CD8-positive, alpha-beta memory T cell (primary cell): ENCODE measurements at regions of chr2 and their contacts with region 1.

Region 1: DNA sequence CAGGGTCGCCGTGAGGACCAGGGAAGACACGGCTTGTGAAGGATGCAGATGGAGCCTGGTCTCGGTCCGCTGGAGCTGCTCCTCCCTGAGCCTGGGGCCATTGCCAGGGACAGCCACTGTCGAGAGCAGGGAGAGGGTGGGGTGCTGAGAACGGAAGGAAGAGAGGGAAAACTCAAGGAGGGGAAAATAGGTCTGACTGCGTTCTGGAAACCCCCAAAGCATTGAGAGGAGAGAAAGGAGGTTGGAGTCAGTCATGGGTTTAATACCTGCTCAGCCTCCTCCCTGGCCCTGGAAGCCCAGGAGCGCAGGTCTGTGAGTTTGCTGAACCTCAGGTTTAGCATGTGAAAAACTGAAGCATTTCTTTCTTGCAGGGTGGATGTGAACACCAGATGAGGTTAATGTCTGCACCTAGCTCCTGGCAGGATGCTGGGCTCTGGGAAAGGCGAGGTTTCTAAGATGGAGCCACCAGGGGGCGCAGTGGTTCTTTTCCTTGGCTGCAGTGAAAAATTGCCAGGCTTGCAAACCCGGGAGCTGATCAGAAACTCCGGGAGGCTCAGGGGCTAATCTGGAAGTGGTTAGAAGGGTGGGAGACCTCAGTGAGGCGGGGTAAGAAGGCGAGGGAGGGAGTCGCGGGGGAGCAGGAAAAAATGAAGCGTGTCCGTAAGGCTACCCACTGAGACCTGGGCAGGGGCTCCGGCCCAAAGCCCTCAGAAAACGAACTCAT is 33.6 kb upstream of the RNF149 start:
- DNase-seq: peak; percentile 49 to 76 (median 63)
- H3K4me3 ChIP-seq: no peak overlapping the region
- H3K4me3 Mint-ChIP-seq: peak overlapping the region in 2 of 7 donors; percentile 3 to 56
- H3K27ac ChIP-seq: no peak overlapping the region
- H3K27ac Mint-ChIP-seq: no peak overlapping the region
- H3K4me1 ChIP-seq: peaks cover 19% of the 10 kb centered on the region
- H3K4me1 Mint-ChIP-seq: peaks cover 19 to 31% (median 24%) of the 10 kb centered on the region in 3 donors
- H3K27me3 ChIP-seq: no peaks in the 10 kb centered on the region
- H3K27me3 Mint-ChIP-seq: no peaks in the 10 kb centered on the region

Region 2: DNA sequence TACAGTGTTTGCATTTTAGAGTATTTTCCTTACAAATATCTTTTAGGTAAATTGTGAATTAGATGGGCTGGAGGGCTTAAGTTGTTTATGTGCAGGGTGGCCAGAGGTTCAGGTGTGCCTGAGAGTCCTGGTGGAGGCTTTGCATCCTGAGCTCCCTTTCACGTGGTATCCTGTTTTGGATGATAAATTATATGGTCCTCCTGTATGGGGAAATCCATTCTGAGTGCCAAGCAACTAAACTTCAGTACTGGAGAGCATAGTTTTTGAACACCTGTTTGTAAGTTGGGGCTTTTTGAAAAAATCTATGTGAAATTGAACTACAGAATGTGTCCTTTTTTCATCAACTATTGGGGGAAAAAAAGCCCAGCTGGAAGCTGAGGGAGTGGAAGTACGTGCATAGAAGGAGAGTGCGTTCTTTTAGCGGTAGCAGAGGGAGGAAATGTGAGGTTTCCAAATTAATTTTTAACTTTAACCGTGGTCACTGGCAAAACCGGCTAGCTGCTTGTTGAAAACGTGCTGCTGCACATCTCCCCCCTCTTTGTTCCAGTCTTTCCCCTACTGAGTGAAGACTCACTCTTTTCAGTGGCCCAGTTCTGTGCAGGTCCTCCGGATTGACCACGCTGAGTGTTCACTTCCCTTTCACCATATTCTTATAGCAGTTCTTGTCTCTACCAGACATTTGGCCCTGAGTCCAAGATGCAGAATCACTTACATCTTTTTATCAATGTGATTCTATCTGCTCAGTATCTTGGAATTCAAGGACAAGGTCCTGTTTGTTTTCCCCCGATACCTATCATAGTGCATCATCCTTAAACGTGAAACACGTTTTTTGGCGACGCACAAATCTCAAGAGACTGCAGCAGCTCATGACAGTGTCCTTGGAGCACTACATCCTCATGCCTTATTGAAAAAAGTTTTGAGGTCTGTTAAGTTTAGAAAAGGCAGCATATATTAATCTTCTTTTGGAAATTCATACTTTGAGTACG is 74.1 kb before region 1 on chr2:
- CTCF ChIA-PET with region 1: no interaction called
- POLR2A ChIA-PET with region 1: no interaction called
- DNase-seq: no peak
- H3K4me3 ChIP-seq: no peak overlapping the region
- H3K4me3 Mint-ChIP-seq: no peak overlapping the region
- H3K27ac ChIP-seq: no peak overlapping the region
- H3K27ac Mint-ChIP-seq: peak overlapping the region; percentile 24 to 91 (median 78)
- H3K4me1 ChIP-seq: peaks cover 16% of the 10 kb centered on the region
- H3K4me1 Mint-ChIP-seq: peaks cover 33 to 66% (median 59%) of the 10 kb centered on the region in 3 donors
- H3K27me3 ChIP-seq: no peaks in the 10 kb centered on the region
- H3K27me3 Mint-ChIP-seq: no peaks in the 10 kb centered on the region

Region 3: GRCh38 chr2:101308432-101309210 is 33.4 kb before region 1 on chr2 and contains the start of gene RNF149:
- CTCF ChIA-PET with region 1: interaction called, 28 read pairs
- POLR2A ChIA-PET with region 1: interaction called, 5 read pairs
- DNase-seq: peak; percentile 87 to 94 (median 91)
- H3K4me3 ChIP-seq: peak within 1 kb of the TSS; percentile 85
- H3K4me3 Mint-ChIP-seq: peak within 1 kb of the TSS; percentile 91 to 99 (median 98)
- H3K27ac ChIP-seq: peak within 1 kb of the TSS; percentile 88
- H3K27ac Mint-ChIP-seq: peak within 1 kb of the TSS; percentile 90 to 100 (median 99)
- H3K4me1 ChIP-seq: peaks cover 74% of the 10 kb centered on the region
- H3K4me1 Mint-ChIP-seq: peaks cover 71 to 85% (median 81%) of the 10 kb centered on the region in 3 donors
- H3K27me3 ChIP-seq: no peaks in the 10 kb centered on the region
- H3K27me3 Mint-ChIP-seq: no peaks in the 10 kb centered on the region
- total RNA-seq, gene RNF149: 43.4 TPM

Region 4: DNA sequence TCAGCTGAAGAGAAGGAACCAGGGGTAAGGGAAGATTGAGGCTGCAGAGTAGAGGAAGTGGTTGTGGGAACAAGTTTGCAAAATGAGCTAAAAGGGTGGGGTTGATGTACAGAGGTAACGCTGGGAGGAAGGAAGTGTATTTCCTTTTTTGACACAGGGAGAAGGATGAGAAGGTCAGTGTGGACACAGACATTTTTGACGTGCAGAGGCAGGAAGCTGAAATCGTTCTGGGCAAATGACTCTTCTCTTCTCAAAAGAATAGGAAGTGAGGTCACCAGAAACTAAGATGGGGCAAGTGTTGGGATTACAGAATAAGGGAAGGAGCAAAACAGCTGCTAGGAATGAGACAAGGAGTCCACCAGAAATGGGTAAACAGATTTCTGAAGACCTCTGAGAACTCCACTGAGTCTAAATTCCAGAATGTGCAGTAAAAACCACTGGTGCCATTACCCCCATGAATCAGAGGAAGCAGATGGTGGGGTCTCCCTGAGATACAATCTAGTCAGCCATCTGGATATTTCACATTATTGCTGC is 13.5 kb before region 1 on chr2:
- CTCF ChIA-PET with region 1: interaction called, 18 read pairs
- POLR2A ChIA-PET with region 1: interaction called, 3 read pairs
- DNase-seq: peak in 3 of 5 donors; percentile 54 to 73 (median 72)
- H3K4me3 ChIP-seq: peak overlapping the region; percentile 25
- H3K4me3 Mint-ChIP-seq: no peak overlapping the region
- H3K27ac ChIP-seq: peak overlapping the region; percentile 40
- H3K27ac Mint-ChIP-seq: no peak overlapping the region
- H3K4me1 ChIP-seq: peaks cover 66% of the 10 kb centered on the region
- H3K4me1 Mint-ChIP-seq: peaks cover 0 to 7% (median 5%) of the 10 kb centered on the region in 3 donors
- H3K27me3 ChIP-seq: no peaks in the 10 kb centered on the region
- H3K27me3 Mint-ChIP-seq: no peaks in the 10 kb centered on the region

Region 5: DNA sequence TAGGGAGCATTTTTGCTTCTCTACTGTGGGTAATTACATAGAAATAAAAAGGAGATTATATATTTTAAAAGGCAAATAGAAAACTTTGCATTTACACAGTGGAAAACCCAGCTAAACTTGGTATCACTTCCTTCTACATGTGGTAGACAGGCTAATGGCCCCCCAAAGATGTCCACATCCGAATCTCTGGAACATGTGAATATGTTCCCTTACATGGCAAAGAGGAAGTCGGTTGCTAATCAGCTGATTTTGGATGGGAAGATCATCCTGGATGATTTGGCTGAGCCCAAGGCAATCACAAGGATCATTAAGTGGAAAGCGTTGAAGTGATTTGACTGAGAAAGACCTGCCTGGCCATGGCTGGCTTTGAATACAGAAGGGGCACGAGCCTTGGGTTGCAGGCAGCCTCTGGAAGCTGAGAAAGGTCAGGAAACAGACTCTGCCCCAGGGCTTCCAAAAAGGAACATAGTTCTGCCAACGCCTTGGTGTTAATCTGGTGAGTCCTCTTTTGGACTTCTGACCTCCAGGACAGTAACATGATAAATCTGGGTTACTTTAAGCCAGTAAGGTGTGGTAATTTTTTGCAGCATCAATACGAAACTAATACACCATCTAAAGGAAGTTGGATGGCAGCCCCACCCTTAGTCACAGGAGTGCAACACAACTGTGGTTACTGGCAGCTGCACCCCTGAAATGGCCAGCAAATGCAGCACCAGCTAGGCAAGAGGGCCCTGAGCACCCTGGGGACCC is 19.2 kb after region 1 on chr2:
- CTCF ChIA-PET with region 1: interaction called, 41 read pairs
- POLR2A ChIA-PET with region 1: no interaction called
- DNase-seq: peak in 1 of 5 donors; percentile 23
- H3K4me3 ChIP-seq: peak overlapping the region; percentile 9
- H3K4me3 Mint-ChIP-seq: peak overlapping the region in 6 of 7 donors; percentile 29 to 81 (median 54)
- H3K27ac ChIP-seq: no peak overlapping the region
- H3K27ac Mint-ChIP-seq: peak overlapping the region; percentile 16 to 90 (median 80)
- H3K4me1 ChIP-seq: peaks cover 27% of the 10 kb centered on the region
- H3K4me1 Mint-ChIP-seq: peaks cover 28 to 37% (median 34%) of the 10 kb centered on the region in 3 donors
- H3K27me3 ChIP-seq: no peaks in the 10 kb centered on the region
- H3K27me3 Mint-ChIP-seq: peaks cover 0 to 6% of the 10 kb centered on the region in 2 donors

Region 6: GRCh38 chr2:101387151-101387807 is 45.2 kb after region 1 on chr2 and contains the start of gene CREG2:
- CTCF ChIA-PET with region 1: interaction called, 21 read pairs
- POLR2A ChIA-PET with region 1: no interaction called
- DNase-seq: peak; percentile 34 to 64 (median 53)
- H3K4me3 ChIP-seq: peak within 1 kb of the TSS; percentile 27
- H3K4me3 Mint-ChIP-seq: peak within 1 kb of the TSS; percentile 63 to 77 (median 77)
- H3K27ac ChIP-seq: no peak within 1 kb of the TSS
- H3K27ac Mint-ChIP-seq: peak within 1 kb of the TSS in 2 of 8 donors; percentile 47 to 72
- H3K4me1 ChIP-seq: peaks cover 13% of the 10 kb centered on the region
- H3K4me1 Mint-ChIP-seq: peaks cover 5 to 12% (median 7%) of the 10 kb centered on the region in 3 donors
- H3K27me3 ChIP-seq: peaks cover 25% of the 10 kb centered on the region
- H3K27me3 Mint-ChIP-seq: peaks cover 50 to 77% of the 10 kb centered on the region in 2 donors
- total RNA-seq, gene CREG2: not detected

Region 7: DNA sequence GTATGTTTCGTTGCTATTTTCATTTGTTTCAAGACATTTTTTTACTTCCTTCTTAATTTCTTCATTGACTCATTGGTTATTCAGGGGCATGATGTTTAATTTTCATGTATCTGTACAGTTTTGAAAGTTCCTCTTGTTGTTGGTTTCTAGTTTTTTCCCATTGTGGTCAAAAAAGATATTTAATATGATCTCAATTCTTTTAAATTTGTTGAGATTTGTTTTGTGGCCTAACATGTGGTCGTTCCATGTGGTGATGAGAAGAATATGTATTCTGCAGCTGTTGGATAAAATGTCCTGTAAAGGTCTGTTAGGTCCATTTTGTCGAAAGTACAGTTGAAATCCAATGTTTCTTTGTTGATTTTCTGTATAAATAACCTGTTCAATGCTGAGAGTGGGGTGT is 245.2 kb after region 1 on chr2:
- CTCF ChIA-PET with region 1: no interaction called
- POLR2A ChIA-PET with region 1: no interaction called
- DNase-seq: no peak
- H3K4me3 ChIP-seq: no peak overlapping the region
- H3K4me3 Mint-ChIP-seq: no peak overlapping the region
- H3K27ac ChIP-seq: no peak overlapping the region
- H3K27ac Mint-ChIP-seq: no peak overlapping the region
- H3K4me1 ChIP-seq: no peaks in the 10 kb centered on the region
- H3K4me1 Mint-ChIP-seq: no peaks in the 10 kb centered on the region
- H3K27me3 ChIP-seq: no peaks in the 10 kb centered on the region
- H3K27me3 Mint-ChIP-seq: peaks cover 7 to 8% of the 10 kb centered on the region in 2 donors